SK-N-SH (cell line): ENCODE measurements at regions of chr1 and their contacts with region 1.

Region 1: GRCh38 chr1:183915625-183916510 is 110.9 kb downstream of the RGL1 start:
- DNase-seq: peak; percentile 63
- H3K4me3 ChIP-seq: peak overlapping the region in 1 of 2 experiments; percentile 27; a peak in 1 of 4 replicates
- H3K27ac ChIP-seq: peak overlapping the region; percentile 68 to 80
- H3K4me1 ChIP-seq: peaks cover 15 to 29% of the 10 kb centered on the region in 2 experiments
- H3K27me3 ChIP-seq: no peaks in the 10 kb centered on the region
- CTCF ChIP-seq: peak; percentile 86
- EP300 ChIP-seq: peak in 1 of 2 experiments; percentile 68; a peak in 1 of 4 replicates
- RAD21 ChIP-seq: peak; percentile 97

Region 2: DNA sequence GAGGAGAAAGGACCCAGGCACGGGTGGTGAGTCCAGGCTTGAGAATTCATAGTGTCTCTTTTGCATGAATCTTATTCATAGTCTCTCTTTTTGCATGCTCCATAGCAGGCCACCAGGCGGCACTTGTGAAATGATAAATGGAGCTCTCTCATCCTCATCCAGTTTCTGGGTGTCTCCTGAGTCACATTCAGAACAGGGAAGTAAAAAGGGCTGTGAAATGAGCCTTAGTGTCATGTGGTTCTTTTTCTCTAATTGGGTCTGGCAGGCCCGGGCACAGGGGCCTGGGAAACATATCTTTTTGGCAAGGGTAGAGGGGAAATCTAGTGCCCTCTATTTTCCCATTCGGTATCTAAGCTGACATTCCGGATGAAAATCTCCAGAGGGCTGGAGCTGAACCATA is 306.6 kb before region 1 on chr1:
- CTCF ChIA-PET with region 1: interaction called, 11 read pairs
- POLR2A ChIA-PET with region 1: no interaction called
- DNase-seq: peak; percentile 49
- H3K4me3 ChIP-seq: peak overlapping the region; percentile 23 to 40; a peak in 3 of 4 replicates
- H3K27ac ChIP-seq: peak overlapping the region; percentile 94 to 98
- H3K4me1 ChIP-seq: peaks cover 15 to 20% of the 10 kb centered on the region in 2 experiments
- H3K27me3 ChIP-seq: no peaks in the 10 kb centered on the region
- CTCF ChIP-seq: peak; percentile 80
- EP300 ChIP-seq: peak; percentile 51 to 61; a peak in 3 of 4 replicates
- RAD21 ChIP-seq: peak; percentile 71

Region 3: GRCh38 chr1:183655562-183656075 is 260.2 kb before region 1 on chr1:
- CTCF ChIA-PET with region 1: interaction called, 219 read pairs
- POLR2A ChIA-PET with region 1: interaction called, 6 read pairs
- DNase-seq: peak; percentile 82
- H3K4me3 ChIP-seq: no peak overlapping the region; a peak in 1 of 4 replicates
- H3K27ac ChIP-seq: peak overlapping the region; percentile 19 to 43; a peak in 3 of 4 replicates
- H3K4me1 ChIP-seq: peaks cover 2 to 9% of the 10 kb centered on the region in 2 experiments; a peak in 3 of 4 replicates
- H3K27me3 ChIP-seq: no peaks in the 10 kb centered on the region
- CTCF ChIP-seq: peak; percentile 93
- EP300 ChIP-seq: no peak
- RAD21 ChIP-seq: peak; percentile 98

Region 4: DNA sequence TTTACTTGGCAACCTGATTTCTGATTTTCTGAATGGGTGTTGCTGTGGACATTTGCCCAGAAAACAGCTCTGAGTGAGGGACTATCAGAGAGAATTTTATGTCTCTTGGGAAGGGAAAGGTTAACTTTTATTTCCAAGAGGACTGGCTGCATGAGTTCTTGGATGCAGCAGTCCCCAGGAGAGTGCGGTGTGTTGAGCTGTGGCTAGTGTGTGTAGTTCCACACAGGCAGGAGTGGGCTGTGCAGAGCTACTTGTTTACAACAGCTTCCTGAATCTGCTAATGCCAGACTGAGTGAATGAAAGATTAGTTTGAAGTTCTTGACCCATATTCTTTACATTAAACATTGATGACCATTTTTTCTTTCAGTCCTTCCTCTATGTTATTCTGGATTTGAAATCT is 221.8 kb before region 1 on chr1:
- CTCF ChIA-PET with region 1: interaction called, 12 read pairs
- POLR2A ChIA-PET with region 1: interaction called, 4 read pairs
- DNase-seq: no peak
- H3K4me3 ChIP-seq: no peak overlapping the region
- H3K27ac ChIP-seq: no peak overlapping the region
- H3K4me1 ChIP-seq: peaks cover 6 to 8% of the 10 kb centered on the region in 2 experiments; a peak in 1 of 4 replicates
- H3K27me3 ChIP-seq: no peaks in the 10 kb centered on the region
- CTCF ChIP-seq: no peak
- EP300 ChIP-seq: no peak
- RAD21 ChIP-seq: no peak

Region 5: DNA sequence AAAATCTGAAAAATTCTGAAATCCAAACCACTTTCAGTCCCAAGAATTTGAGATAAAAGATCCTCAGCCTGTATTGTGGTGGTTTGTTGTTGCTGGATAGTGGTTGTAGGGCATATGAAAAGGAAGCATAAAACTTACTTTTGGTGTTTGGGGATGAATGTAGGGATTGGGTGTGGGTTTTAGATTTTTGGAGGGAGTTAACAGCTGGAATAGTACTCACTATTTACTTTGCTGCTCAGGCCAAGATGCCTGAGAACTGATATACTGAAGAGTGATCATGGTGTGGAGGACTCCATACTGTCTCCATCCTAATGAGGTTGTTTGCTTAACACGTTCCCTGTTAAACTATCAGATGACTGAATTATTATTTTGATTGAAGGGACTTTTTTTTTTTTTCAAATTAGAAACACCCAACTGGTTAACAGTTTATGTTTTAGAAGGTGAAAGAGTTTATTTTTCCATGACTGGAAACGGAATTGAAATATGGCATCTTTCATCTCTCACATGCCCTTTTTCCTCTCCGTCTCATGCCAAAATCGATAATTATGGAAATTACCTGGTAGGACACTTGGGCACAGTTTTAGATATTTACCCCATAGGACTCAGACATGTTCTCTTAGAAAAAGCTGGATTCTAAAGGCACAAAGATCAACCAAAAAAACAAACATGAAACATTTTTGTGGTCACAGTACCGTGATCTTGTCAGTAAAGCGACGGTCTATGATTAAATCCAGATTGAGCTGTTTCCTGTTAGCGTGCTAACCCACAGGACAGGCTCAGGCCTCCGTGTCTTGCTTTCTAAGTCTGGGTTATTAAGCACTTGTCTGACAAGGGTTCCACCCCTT is 73.7 kb before region 1 on chr1:
- CTCF ChIA-PET with region 1: interaction called, 10 read pairs
- POLR2A ChIA-PET with region 1: no interaction called
- DNase-seq: peak; percentile 43
- H3K4me3 ChIP-seq: peak overlapping the region; percentile 27 to 35; a peak in 2 of 4 replicates
- H3K27ac ChIP-seq: peak overlapping the region; percentile 83 to 100
- H3K4me1 ChIP-seq: peaks cover 35 to 41% of the 10 kb centered on the region in 2 experiments
- H3K27me3 ChIP-seq: no peaks in the 10 kb centered on the region
- CTCF ChIP-seq: no peak
- EP300 ChIP-seq: peak; percentile 82 to 92
- RAD21 ChIP-seq: 0 out of 2 replicates have a peak, but pooled peaks have one; percentile 1

Region 6: GRCh38 chr1:183898001-183898396 is 17.9 kb before region 1 on chr1:
- CTCF ChIA-PET with region 1: interaction called, 29 read pairs
- POLR2A ChIA-PET with region 1: no interaction called
- DNase-seq: no peak
- H3K4me3 ChIP-seq: no peak overlapping the region
- H3K27ac ChIP-seq: no peak overlapping the region
- H3K4me1 ChIP-seq: peaks cover 0 to 12% of the 10 kb centered on the region in 2 experiments; a peak in 2 of 4 replicates
- H3K27me3 ChIP-seq: no peaks in the 10 kb centered on the region
- CTCF ChIP-seq: no peak
- EP300 ChIP-seq: no peak
- RAD21 ChIP-seq: no peak

Region 7: GRCh38 chr1:183979437-183979836 is 63.6 kb after region 1 on chr1:
- CTCF ChIA-PET with region 1: no interaction called
- POLR2A ChIA-PET with region 1: no interaction called
- DNase-seq: no peak
- H3K4me3 ChIP-seq: no peak overlapping the region
- H3K27ac ChIP-seq: no peak overlapping the region
- H3K4me1 ChIP-seq: peaks cover 3 to 10% of the 10 kb centered on the region in 2 experiments; a peak in 2 of 4 replicates
- H3K27me3 ChIP-seq: no peaks in the 10 kb centered on the region
- CTCF ChIP-seq: no peak
- EP300 ChIP-seq: no peak
- RAD21 ChIP-seq: no peak

Region 8: GRCh38 chr1:184002071-184002470 is 86.2 kb after region 1 on chr1:
- CTCF ChIA-PET with region 1: no interaction called
- POLR2A ChIA-PET with region 1: no interaction called
- DNase-seq: no peak
- H3K4me3 ChIP-seq: no peak overlapping the region
- H3K27ac ChIP-seq: peak overlapping the region; percentile 83 to 92; a peak in 3 of 4 replicates
- H3K4me1 ChIP-seq: peaks cover 3 to 19% of the 10 kb centered on the region in 2 experiments; a peak in 2 of 4 replicates
- H3K27me3 ChIP-seq: no peaks in the 10 kb centered on the region
- CTCF ChIP-seq: no peak
- EP300 ChIP-seq: peak in 1 of 2 experiments; percentile 67; a peak in 1 of 4 replicates
- RAD21 ChIP-seq: no peak